HepG2 (cell line): ENCODE measurements at regions of chr6 and their contacts with region 1.

Region 1: GRCh38 chr6:55445648-55446204 is 118.5 kb downstream of the GFRAL start:
- DNase-seq: peak; percentile 12
- ATAC-seq: peak; percentile 59
- H3K4me3 ChIP-seq: no peak overlapping the region
- H3K27ac ChIP-seq: no peak overlapping the region
- H3K4me1 ChIP-seq: no peaks in the 10 kb centered on the region
- H3K27me3 ChIP-seq: no peaks in the 10 kb centered on the region
- CTCF ChIP-seq: peak; percentile 64
- EP300 ChIP-seq: no peak
- POLR2A ChIP-seq: no peak
- RAD21 ChIP-seq: 0 out of 2 replicates have a peak, but pooled peaks have one; percentile 53

Region 2: DNA sequence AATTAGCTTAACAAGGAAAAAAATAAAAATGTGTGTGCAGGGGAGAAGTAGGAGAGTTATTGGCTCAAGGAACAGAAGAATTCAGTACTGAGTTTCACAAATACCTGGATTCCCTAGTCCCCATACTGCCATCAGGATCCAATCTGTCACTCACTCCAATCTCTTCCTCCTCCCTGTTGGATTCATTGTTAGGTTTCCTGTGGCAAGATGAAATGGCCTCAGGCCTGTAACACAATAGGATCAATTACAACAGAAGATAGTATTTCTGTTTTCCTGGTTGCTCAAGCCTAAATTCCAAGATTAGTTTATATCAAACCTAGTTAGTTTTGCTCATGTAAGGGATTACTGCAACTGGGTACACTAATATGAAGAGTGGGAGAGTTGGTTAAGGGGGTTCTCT is 247.0 kb before region 1 on chr6:
- CTCF ChIA-PET with region 1: no interaction called
- POLR2A ChIA-PET with region 1: no interaction called
- in situ Hi-C with region 1: no loop called
- intact Hi-C with region 1: no loop called
- DNase-seq: no peak
- ATAC-seq: no peak
- H3K4me3 ChIP-seq: no peak overlapping the region
- H3K27ac ChIP-seq: no peak overlapping the region
- H3K4me1 ChIP-seq: no peaks in the 10 kb centered on the region
- H3K27me3 ChIP-seq: no peaks in the 10 kb centered on the region
- CTCF ChIP-seq: no peak
- EP300 ChIP-seq: no peak
- POLR2A ChIP-seq: no peak
- RAD21 ChIP-seq: no peak

Region 3: GRCh38 chr6:55276745-55277530 is 168.8 kb before region 1 on chr6:
- CTCF ChIA-PET with region 1: no interaction called
- POLR2A ChIA-PET with region 1: no interaction called
- in situ Hi-C with region 1: no loop called
- intact Hi-C with region 1: loop called (anchors 5 kb)
- DNase-seq: peak; percentile 71
- ATAC-seq: peak; percentile 83
- H3K4me3 ChIP-seq: no peak overlapping the region
- H3K27ac ChIP-seq: no peak overlapping the region
- H3K4me1 ChIP-seq: no peaks in the 10 kb centered on the region
- H3K27me3 ChIP-seq: no peaks in the 10 kb centered on the region
- CTCF ChIP-seq: peak; percentile 76
- EP300 ChIP-seq: no peak
- POLR2A ChIP-seq: no peak
- RAD21 ChIP-seq: peak; percentile 29; the same call in 1 of the 2 replicates

Region 4: GRCh38 chr6:55886185-55886836 is 440.6 kb after region 1 on chr6:
- CTCF ChIA-PET with region 1: interaction called, 6 read pairs
- POLR2A ChIA-PET with region 1: no interaction called
- in situ Hi-C with region 1: no loop called
- intact Hi-C with region 1: loop called (anchors 1 kb)
- DNase-seq: peak; percentile 64
- ATAC-seq: peak; percentile 72
- H3K4me3 ChIP-seq: 0 out of 6 replicates have a peak overlapping the region, but pooled peaks of 1 of the 3 experiments have one; percentile 20
- H3K27ac ChIP-seq: no peak overlapping the region
- H3K4me1 ChIP-seq: peaks cover 15% of the 10 kb centered on the region
- H3K27me3 ChIP-seq: peaks cover 0 to 3% of the 10 kb centered on the region in 2 experiments; a peak in 1 of 5 replicates
- CTCF ChIP-seq: peak; percentile 37
- EP300 ChIP-seq: no peak; a peak in 1 of 4 replicates
- POLR2A ChIP-seq: no peak
- RAD21 ChIP-seq: no peak

Region 5: GRCh38 chr6:55953335-55953734 is 507.6 kb after region 1 on chr6:
- CTCF ChIA-PET with region 1: no interaction called
- POLR2A ChIA-PET with region 1: no interaction called
- in situ Hi-C with region 1: loop called (anchors 25 kb)
- intact Hi-C with region 1: loop called (anchors 1 kb)
- DNase-seq: peak; percentile 6
- ATAC-seq: peak; percentile 55; the same call in 2 of the 3 replicates
- H3K4me3 ChIP-seq: no peak overlapping the region
- H3K27ac ChIP-seq: no peak overlapping the region
- H3K4me1 ChIP-seq: no peaks in the 10 kb centered on the region
- H3K27me3 ChIP-seq: no peaks in the 10 kb centered on the region
- CTCF ChIP-seq: peak; percentile 52
- EP300 ChIP-seq: no peak
- POLR2A ChIP-seq: no peak
- RAD21 ChIP-seq: no peak

Region 6: GRCh38 chr6:56595490-56596122 is 1149.9 kb after region 1 on chr6:
- CTCF ChIA-PET with region 1: no interaction called
- POLR2A ChIA-PET with region 1: no interaction called
- in situ Hi-C with region 1: no loop called
- intact Hi-C with region 1: loop called (anchors 10 kb)
- DNase-seq: peak; percentile 43
- ATAC-seq: peak; percentile 89
- H3K4me3 ChIP-seq: no peak overlapping the region
- H3K27ac ChIP-seq: no peak overlapping the region
- H3K4me1 ChIP-seq: no peaks in the 10 kb centered on the region
- H3K27me3 ChIP-seq: no peaks in the 10 kb centered on the region
- CTCF ChIP-seq: peak; percentile 74
- EP300 ChIP-seq: no peak
- POLR2A ChIP-seq: no peak
- RAD21 ChIP-seq: no peak